Right ventricle myocardium inferior (tissue), 1 donor: ENCODE measurements at regions of chr3 and their contacts with region 1.

Region 1: GRCh38 chr3:185498503-185499396 is at the start of gene TMEM41A:
- DNase-seq: peak; percentile 97
- ATAC-seq: peak; percentile 98
- total RNA-seq, gene TMEM41A: 10.0 TPM

Region 2: GRCh38 chr3:185470323-185470722 is 28.4 kb before region 1 on chr3:
- intact Hi-C with region 1: no loop called
- DNase-seq: no peak
- ATAC-seq: no peak

Region 3: GRCh38 chr3:185558395-185558794 is 59.6 kb after region 1 on chr3:
- intact Hi-C with region 1: loop called (anchors 5 kb)
- DNase-seq: no peak
- ATAC-seq: no peak

Region 4: GRCh38 chr3:185585859-185586685 is 87.3 kb after region 1 on chr3 and contains the start of gene SENP2:
- intact Hi-C with region 1: loop called (anchors 2 kb)
- DNase-seq: peak; percentile 99
- ATAC-seq: peak; percentile 98
- total RNA-seq, gene SENP2: 25.1 TPM